K562 (cell line): ENCODE measurements at regions of chr1 and their contacts with region 1.

Region 1: GRCh38 chr1:169367486-169368405 is at the starts of genes BLZF1 and NME7:
- DNase-seq: peak; percentile 95 to 99 (median 96)
- ATAC-seq: peak; percentile 98
- H3K4me3 ChIP-seq: peak within 1 kb of the TSS; percentile 71
- H3K27ac ChIP-seq: peak within 1 kb of the TSS; percentile 84
- H3K4me1 ChIP-seq: peaks cover 0 to 11% of the 10 kb centered on the region in 2 experiments; a peak in 3 of 5 replicates
- H3K27me3 ChIP-seq: no peaks in the 10 kb centered on the region
- CTCF ChIP-seq: no peak
- EP300 ChIP-seq: 0 out of 2 replicates have a peak, but pooled peaks have one; percentile 35
- POLR2A ChIP-seq: peak; percentile 83
- RAD21 ChIP-seq: no peak; a peak in 1 of 4 replicates
- polyA plus RNA-seq, gene BLZF1: 25.3 to 32.8 TPM
- polyA plus RNA-seq, gene NME7: 40.3 to 43.2 TPM

Region 2: GRCh38 chr1:168603501-168604110 is 764.1 kb before region 1 on chr1:
- CTCF ChIA-PET with region 1: no interaction called
- POLR2A ChIA-PET with region 1: no interaction called
- in situ Hi-C with region 1: loop called (anchors 25 kb)
- intact Hi-C with region 1: no loop called
- DNase-seq: peak; percentile 62 to 76 (median 68)
- ATAC-seq: peak; percentile 97
- H3K4me3 ChIP-seq: no peak overlapping the region
- H3K27ac ChIP-seq: no peak overlapping the region
- H3K4me1 ChIP-seq: no peaks in the 10 kb centered on the region
- H3K27me3 ChIP-seq: peaks cover 2 to 4% of the 10 kb centered on the region in 2 experiments; a peak in 2 of 5 replicates
- CTCF ChIP-seq: peak; percentile 80 to 88 (median 87)
- EP300 ChIP-seq: no peak
- POLR2A ChIP-seq: no peak
- RAD21 ChIP-seq: peak; percentile 92 to 95

Region 3: GRCh38 chr1:169485544-169486278 is 118.0 kb after region 1 on chr1 and contains the start of gene SLC19A2:
- CTCF ChIA-PET with region 1: no interaction called
- POLR2A ChIA-PET with region 1: interaction called, 5 read pairs
- in situ Hi-C with region 1: no loop called
- intact Hi-C with region 1: loop called (anchors 2 kb)
- DNase-seq: peak; percentile 100
- ATAC-seq: peak; percentile 95
- H3K4me3 ChIP-seq: peak within 1 kb of the TSS; percentile 79
- H3K27ac ChIP-seq: peak within 1 kb of the TSS; percentile 89
- H3K4me1 ChIP-seq: peaks cover 13 to 23% of the 10 kb centered on the region in 2 experiments; a peak in 4 of 5 replicates
- H3K27me3 ChIP-seq: no peaks in the 10 kb centered on the region
- CTCF ChIP-seq: peak; percentile 58 to 72 (median 65)
- EP300 ChIP-seq: no peak
- POLR2A ChIP-seq: peak; percentile 96
- RAD21 ChIP-seq: peak; percentile 37 to 44
- polyA plus RNA-seq, gene SLC19A2: 7.4 to 8.9 TPM

Region 4: DNA sequence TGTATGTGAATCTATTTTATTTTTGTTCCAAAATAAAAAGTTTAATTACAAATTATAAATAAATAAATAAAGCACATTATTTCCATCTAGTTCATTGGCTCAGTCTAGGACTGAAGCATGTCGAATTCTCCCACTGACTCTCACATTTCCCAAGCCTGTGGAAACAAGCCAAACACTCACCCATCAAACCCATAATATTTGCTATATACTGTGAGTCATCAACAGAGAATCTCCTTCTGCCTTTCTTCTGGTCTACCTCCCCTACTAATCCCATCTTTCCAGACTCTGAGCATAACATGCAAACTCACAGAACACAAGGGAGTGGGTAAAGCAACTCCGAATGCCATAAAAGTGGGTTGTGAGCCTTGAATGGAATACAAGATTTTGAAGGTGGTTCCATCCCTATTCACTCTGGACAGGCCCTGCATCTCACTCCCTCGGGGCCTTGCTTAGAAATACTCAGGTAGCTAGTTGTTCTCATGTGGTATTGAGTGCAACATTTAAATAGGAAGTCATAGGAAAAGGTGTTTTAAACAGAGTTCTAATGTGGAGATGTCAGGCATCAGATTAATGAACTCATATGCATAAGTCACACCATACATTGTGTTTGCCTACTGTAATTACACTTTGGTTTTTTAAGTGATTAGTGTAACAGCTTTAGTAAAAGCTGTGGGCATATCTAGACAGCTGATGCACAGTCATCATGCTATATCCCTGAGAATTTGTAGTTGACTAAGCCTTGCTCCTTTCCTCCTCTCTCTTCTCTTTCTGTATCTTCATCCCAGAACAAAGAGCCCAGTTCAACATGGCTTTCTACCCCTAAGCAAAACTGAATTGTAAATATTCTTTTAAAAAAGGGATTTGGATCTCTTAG is 171.5 kb after region 1 on chr1:
- CTCF ChIA-PET with region 1: no interaction called
- POLR2A ChIA-PET with region 1: no interaction called
- in situ Hi-C with region 1: no loop called
- intact Hi-C with region 1: no loop called
- DNase-seq: no peak
- ATAC-seq: no peak
- H3K4me3 ChIP-seq: no peak overlapping the region
- H3K27ac ChIP-seq: no peak overlapping the region
- H3K4me1 ChIP-seq: no peaks in the 10 kb centered on the region; a peak in 1 of 5 replicates
- H3K27me3 ChIP-seq: peaks cover 0 to 2% of the 10 kb centered on the region in 2 experiments; a peak in 1 of 5 replicates
- CTCF ChIP-seq: no peak
- EP300 ChIP-seq: no peak
- POLR2A ChIP-seq: no peak
- RAD21 ChIP-seq: no peak